ENCODE measurements at regions of chr2 and their contacts with region 1.

Region 1: DNA sequence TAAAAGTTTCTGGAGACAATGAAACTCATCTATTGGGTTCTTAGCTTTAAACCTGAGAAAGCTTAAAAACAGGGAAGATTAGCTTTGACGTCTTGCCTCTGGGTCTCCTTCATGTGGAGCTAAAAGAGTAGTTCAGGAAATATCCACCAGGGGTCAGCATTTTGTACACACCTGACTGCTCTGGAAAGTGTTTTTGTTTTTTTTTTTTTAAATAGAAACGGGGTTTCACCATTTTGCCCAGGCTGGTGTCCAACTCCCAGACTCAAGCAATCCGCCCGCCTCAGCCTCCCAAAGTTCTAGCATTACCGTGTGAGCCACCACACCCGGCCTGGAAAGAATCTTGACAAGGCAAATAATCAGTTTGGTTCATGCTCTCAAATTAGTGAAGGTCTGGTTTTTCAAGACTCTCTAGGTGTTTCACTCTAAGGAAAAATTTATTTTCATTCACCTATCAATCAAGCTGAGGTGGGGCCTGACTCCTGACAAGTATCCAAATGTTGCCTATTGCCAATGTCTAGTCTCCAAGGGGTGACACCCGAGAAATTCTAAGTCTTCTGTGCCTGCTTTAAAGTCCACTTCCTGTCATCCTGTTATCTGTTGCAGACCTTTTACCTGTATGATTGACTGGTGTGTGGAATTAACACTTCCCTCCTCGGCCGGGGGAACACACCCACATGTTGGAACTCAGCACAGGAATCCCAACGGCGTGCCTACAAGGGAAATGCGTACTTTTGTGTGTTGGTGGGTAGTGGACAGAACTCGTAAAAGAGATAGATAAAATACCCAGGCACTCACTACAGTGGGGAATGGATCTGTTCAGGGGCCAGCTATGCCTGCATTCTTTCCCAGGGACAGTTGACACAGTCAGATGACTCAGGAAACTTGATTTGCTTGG is 11.3 kb downstream of the IL1RN start:
- DNase-seq: peak in 1 of 2 donors; percentile 49
- ATAC-seq: peak in 6 of 8 donors; percentile 29 to 74 (median 48)
- H3K4me3 ChIP-seq: no peak overlapping the region
- H3K27ac ChIP-seq: no peak overlapping the region
- H3K4me1 ChIP-seq: peaks cover 0 to 6% (median 0%) of the 10 kb centered on the region in 9 donors
- H3K27me3 ChIP-seq: peaks cover 0 to 5% (median 0%) of the 10 kb centered on the region in 7 donors
- CTCF ChIP-seq: peak; percentile 70 to 85 (median 79)

Region 2: GRCh38 chr2:113198790-113199612 is 60.3 kb after region 1 on chr2:
- intact Hi-C with region 1: loop called in 7 of 10 experiments (anchors 2 to 10 kb)
- DNase-seq: peak; percentile 63 to 84
- ATAC-seq: peak; percentile 83 to 95 (median 90)
- H3K4me3 ChIP-seq: peak overlapping the region; percentile 57 to 90 (median 82)
- H3K27ac ChIP-seq: peak overlapping the region in 7 of 10 donors; percentile 3 to 81 (median 46)
- H3K4me1 ChIP-seq: peaks cover 0 to 17% (median 8%) of the 10 kb centered on the region in 9 donors
- H3K27me3 ChIP-seq: no peaks in the 10 kb centered on the region
- CTCF ChIP-seq: peak; percentile 82 to 99 (median 97)

Region 3: DNA sequence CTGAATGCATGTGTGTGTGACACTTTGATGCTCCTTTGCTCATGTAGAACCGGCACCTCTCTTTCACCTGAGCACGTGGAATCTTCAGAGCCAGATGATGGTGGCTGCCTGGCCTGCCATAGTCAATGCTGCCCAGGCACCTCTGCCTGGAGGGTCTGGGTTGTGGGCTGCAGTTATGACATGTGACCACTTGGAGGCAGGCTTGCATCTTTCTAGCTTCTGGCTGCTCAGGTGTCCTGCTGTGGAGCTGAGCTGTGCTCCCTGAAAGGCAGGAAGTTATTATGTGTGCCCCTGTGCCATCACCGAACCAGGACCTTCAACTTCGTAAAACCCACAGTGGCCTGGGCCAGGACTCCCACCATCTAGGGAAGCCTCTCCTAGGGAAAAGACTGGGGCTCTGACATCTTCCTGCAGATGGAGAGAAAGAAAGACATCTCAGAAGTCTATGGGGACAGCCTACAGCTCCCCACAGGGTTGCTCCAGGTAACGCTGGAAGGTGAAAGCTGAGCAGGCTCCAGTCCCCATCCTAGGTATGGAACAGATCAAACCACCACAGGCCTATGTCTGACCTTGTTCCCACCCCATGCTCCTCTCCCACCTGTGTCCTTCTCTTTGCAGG is 65.3 kb after region 1 on chr2:
- intact Hi-C with region 1: loop called in 7 of 10 experiments (anchors 2 to 10 kb)
- DNase-seq: peak; percentile 60 to 68
- ATAC-seq: peak; percentile 60 to 85 (median 72)
- H3K4me3 ChIP-seq: no peak overlapping the region
- H3K27ac ChIP-seq: no peak overlapping the region
- H3K4me1 ChIP-seq: peaks cover 0 to 14% (median 5%) of the 10 kb centered on the region in 9 donors
- H3K27me3 ChIP-seq: no peaks in the 10 kb centered on the region
- CTCF ChIP-seq: peak; percentile 76 to 91 (median 87)

Region 4: GRCh38 chr2:113370478-113371091 is 231.9 kb after region 1 on chr2:
- intact Hi-C with region 1: loop called (anchors 2 to 10 kb)
- DNase-seq: peak; percentile 42 to 63
- ATAC-seq: peak; percentile 77 to 95 (median 88)
- H3K4me3 ChIP-seq: no peak overlapping the region
- H3K27ac ChIP-seq: no peak overlapping the region
- H3K4me1 ChIP-seq: peaks cover 0 to 6% (median 0%) of the 10 kb centered on the region in 9 donors
- H3K27me3 ChIP-seq: peaks cover 0 to 11% (median 0%) of the 10 kb centered on the region in 7 donors
- CTCF ChIP-seq: peak; percentile 46 to 82 (median 71)

Region 5: DNA sequence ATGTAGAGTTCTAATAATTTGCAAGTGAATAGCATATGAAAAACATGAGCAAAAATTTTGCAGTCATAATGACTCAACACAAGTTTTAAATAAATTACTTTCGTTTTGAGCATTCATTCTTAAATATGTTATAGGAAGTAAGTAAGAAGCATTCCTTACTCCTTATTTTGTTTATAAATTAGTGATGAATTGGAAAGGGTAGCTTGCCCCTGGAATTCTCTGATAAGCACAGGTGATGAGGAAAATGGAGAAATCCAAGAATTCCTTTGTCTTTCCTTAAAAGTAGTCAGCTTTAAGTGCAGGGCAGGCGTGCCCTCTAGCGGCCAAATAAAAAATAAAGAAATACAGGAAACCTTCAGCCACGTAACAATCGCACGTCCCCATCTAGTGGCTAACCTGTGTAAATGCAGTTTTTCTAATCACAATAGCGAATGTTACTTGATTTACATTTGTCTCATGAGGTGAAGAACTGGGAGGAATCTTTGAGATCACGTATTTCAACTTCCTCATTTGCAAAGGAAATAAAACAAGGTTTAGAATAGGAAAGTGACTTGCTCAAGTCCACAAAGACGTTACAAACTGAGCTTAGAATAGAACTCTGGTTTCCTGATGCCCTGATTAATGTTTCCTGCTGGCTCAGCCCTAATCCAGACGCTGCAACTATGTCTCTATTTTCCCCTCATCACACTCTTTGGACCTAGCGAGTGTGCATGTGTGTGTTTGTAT is 251.6 kb after region 1 on chr2:
- intact Hi-C with region 1: loop called in 5 of 10 experiments (anchors 2 to 5 kb)
- DNase-seq: peak in 1 of 2 donors; percentile 57
- ATAC-seq: peak in 7 of 8 donors; percentile 71 to 91 (median 79)
- H3K4me3 ChIP-seq: peak overlapping the region in 6 of 10 donors; percentile 8 to 39 (median 17)
- H3K27ac ChIP-seq: peak overlapping the region in 1 of 10 donors; percentile 69
- H3K4me1 ChIP-seq: peaks cover 0 to 17% (median 0%) of the 10 kb centered on the region in 9 donors
- H3K27me3 ChIP-seq: peaks cover 0 to 6% (median 0%) of the 10 kb centered on the region in 7 donors
- CTCF ChIP-seq: peak; percentile 60 to 99 (median 93)

Measured in heart right ventricle (tissue), 16 donors.